Activated CD4-positive, alpha-beta memory T cell treated with anti-CD3 and anti-CD28 coated beads for 36 hours (primary cell): ENCODE measurements at regions of chr13 and their contacts with region 1.

Region 1: GRCh38 chr13:100588331-100589177 is at the start of gene GGACT:
- DNase-seq: peak; percentile 89
- H3K4me3 Mint-ChIP-seq: peak within 1 kb of the TSS; percentile 73
- H3K27ac Mint-ChIP-seq: peak within 1 kb of the TSS; percentile 85
- H3K4me1 Mint-ChIP-seq: peaks cover 39% of the 10 kb centered on the region
- H3K27me3 Mint-ChIP-seq: no peaks in the 10 kb centered on the region
- total RNA-seq, gene GGACT: 5.8 to 7.0 TPM

Region 2: GRCh38 chr13:99606324-99607066 is 982.1 kb before region 1 on chr13:
- CTCF ChIA-PET with region 1: no interaction called
- POLR2A ChIA-PET with region 1: no interaction called
- intact Hi-C with region 1: loop called (anchors 5 kb)
- DNase-seq: peak; percentile 93
- H3K4me3 Mint-ChIP-seq: peak within 1 kb of the TSS; percentile 85
- H3K27ac Mint-ChIP-seq: peak within 1 kb of the TSS; percentile 72
- H3K4me1 Mint-ChIP-seq: peaks cover 33% of the 10 kb centered on the region
- H3K27me3 Mint-ChIP-seq: no peaks in the 10 kb centered on the region

Region 3: GRCh38 chr13:100560498-100561157 is 27.9 kb before region 1 on chr13:
- CTCF ChIA-PET with region 1: no interaction called
- POLR2A ChIA-PET with region 1: no interaction called
- intact Hi-C with region 1: no loop called
- DNase-seq: no peak
- H3K4me3 Mint-ChIP-seq: no peak overlapping the region
- H3K27ac Mint-ChIP-seq: no peak overlapping the region
- H3K4me1 Mint-ChIP-seq: no peaks in the 10 kb centered on the region
- H3K27me3 Mint-ChIP-seq: no peaks in the 10 kb centered on the region

Region 4: DNA sequence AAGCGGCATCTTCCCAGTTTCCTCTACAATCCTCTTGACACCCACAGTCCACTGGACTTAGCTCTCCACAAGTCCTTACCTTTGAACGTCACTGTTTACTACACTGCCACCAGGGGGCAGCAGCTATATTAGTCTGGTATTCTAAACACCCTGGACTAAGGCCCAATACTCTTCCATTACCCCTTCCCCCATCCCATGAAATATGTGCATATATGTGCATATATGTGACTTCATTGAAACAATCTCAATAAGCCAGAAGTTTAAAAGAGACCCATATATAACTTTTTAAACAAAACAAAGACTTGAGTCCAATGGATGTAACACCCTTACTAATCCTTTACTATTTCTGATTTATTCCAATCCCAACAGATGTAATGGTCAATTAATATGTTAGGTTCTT is 15.4 kb before region 1 on chr13:
- CTCF ChIA-PET with region 1: interaction called, 105 read pairs
- POLR2A ChIA-PET with region 1: interaction called, 3 read pairs
- intact Hi-C with region 1: loop called (anchors 1 kb)
- DNase-seq: peak; percentile 78
- H3K4me3 Mint-ChIP-seq: no peak overlapping the region
- H3K27ac Mint-ChIP-seq: no peak overlapping the region
- H3K4me1 Mint-ChIP-seq: peaks cover 12% of the 10 kb centered on the region
- H3K27me3 Mint-ChIP-seq: no peaks in the 10 kb centered on the region

Region 5: GRCh38 chr13:100608906-100609305 is 20.4 kb after region 1 on chr13:
- CTCF ChIA-PET with region 1: interaction called, 9 read pairs
- POLR2A ChIA-PET with region 1: no interaction called
- intact Hi-C with region 1: loop called (anchors 2 kb)
- DNase-seq: peak; percentile 38
- H3K4me3 Mint-ChIP-seq: no peak overlapping the region
- H3K27ac Mint-ChIP-seq: no peak overlapping the region
- H3K4me1 Mint-ChIP-seq: peaks cover 22% of the 10 kb centered on the region
- H3K27me3 Mint-ChIP-seq: no peaks in the 10 kb centered on the region

Region 6: GRCh38 chr13:100674848-100675660 is 86.5 kb after region 1 on chr13:
- CTCF ChIA-PET with region 1: interaction called, 4 read pairs
- POLR2A ChIA-PET with region 1: interaction called, 6 read pairs
- intact Hi-C with region 1: loop called (anchors 1 kb)
- DNase-seq: peak; percentile 100
- H3K4me3 Mint-ChIP-seq: peak overlapping the region; percentile 78
- H3K27ac Mint-ChIP-seq: peak overlapping the region; percentile 78
- H3K4me1 Mint-ChIP-seq: peaks cover 21% of the 10 kb centered on the region
- H3K27me3 Mint-ChIP-seq: peaks cover 5% of the 10 kb centered on the region